ENCODE measurements at regions of chr5 and their contacts with region 1.

Region 1: GRCh38 chr5:32852535-32852934 is 141.4 kb downstream of the NPR3 start:
- DNase-seq: peak; percentile 29
- H3K4me3 ChIP-seq: no peak overlapping the region
- H3K27ac ChIP-seq: no peak overlapping the region
- H3K4me1 ChIP-seq: no peaks in the 10 kb centered on the region
- H3K27me3 ChIP-seq: no peaks in the 10 kb centered on the region
- CTCF ChIP-seq: peak; percentile 32 to 55 (median 38)
- POLR2A ChIP-seq: no peak

Region 2: DNA sequence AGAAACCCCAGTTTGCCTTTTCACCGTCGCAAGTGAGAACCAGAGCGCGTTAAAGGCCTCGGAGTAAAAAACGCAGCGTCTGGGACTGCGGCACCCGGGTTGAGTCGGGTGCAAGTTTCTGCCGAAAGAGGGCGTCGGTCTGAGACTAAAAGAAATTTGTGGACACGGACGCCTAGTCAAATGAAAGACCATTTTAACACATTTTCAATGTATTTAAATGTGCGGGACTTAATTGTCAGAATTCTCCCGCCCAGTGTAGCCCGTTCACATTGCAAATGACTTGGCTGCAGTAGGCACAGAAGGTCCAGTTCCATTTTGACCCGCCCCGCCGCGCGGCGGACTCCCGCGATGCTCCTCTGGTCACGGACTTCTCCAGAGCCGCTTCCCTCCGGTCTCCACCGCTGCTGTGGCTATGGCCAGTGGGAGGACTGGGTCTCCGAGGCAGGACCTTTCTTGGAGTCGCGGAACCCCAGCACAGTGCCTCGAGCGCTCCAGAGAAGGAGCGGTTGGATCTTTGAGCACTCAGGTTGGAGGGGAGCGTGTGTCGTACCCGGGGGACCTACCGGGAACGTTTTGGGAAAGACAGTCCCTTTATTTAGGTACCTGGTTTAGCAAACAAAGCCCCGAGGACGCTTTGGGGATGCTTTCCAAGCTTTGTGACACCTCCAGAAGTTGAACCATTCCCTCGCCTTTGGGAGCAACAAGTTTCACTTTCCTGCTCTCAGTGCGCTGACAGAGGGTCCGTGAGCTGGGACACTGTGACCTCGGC is 142.6 kb before region 1 on chr5:
- intact Hi-C with region 1: loop called (anchors 10 kb)
- DNase-seq: peak; percentile 88
- H3K4me3 ChIP-seq: peak overlapping the region; percentile 55 to 66
- H3K27ac ChIP-seq: peak overlapping the region; percentile 27 to 76
- H3K4me1 ChIP-seq: no peaks in the 10 kb centered on the region
- H3K27me3 ChIP-seq: no peaks in the 10 kb centered on the region
- CTCF ChIP-seq: peak; percentile 27 to 62 (median 61)
- POLR2A ChIP-seq: no peak

Region 3: DNA sequence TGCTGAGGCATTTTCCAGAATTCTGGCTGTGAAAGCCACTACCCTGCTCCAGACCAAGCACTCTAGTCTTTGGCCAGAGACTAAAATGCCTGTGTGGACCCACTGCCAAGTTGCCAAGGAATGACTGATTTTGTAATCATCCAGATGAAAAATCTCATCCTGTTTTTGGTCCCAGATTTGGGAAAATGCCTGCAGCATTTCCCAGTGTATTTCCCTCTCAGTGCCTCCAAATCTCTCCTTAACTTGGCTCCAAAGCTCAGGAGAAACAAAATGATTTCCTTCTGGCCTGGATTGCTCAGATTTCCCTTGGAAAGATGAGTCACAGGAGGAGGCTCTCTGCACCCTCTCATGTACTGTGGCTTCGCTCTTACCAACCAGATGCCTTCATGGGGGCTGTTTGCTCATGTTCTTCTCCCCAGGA is 253.0 kb after region 1 on chr5:
- intact Hi-C with region 1: no loop called
- DNase-seq: no peak
- H3K4me3 ChIP-seq: no peak overlapping the region
- H3K27ac ChIP-seq: no peak overlapping the region
- H3K4me1 ChIP-seq: no peaks in the 10 kb centered on the region
- H3K27me3 ChIP-seq: no peaks in the 10 kb centered on the region
- CTCF ChIP-seq: no peak
- POLR2A ChIP-seq: no peak

Measured in testis (tissue), 5 donors.